SK-N-SH (cell line): ENCODE measurements at regions of chr11 and their contacts with region 1.

Region 1: DNA sequence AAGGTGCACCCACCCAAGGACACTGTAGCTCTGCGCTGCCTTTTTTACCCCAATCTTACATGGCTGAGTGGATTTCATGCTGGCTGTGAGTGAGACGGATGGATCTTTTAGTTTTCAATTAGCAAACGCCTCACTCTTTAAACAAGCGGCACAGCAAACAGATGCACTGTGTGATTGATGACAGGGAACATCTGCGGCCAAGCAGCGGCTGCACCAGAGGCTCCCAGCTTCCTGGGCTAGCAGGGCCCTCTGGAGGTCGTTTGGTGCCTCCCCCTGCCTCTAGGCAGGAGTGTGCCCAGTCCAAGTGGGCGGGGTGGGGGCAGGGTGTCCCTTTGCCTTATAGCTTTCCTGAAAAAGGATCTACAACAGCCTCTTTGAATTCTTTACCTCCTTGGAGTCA is 2.1 kb upstream of the DRD2 start:
- DNase-seq: peak; percentile 83
- H3K4me3 ChIP-seq: no peak overlapping the region
- H3K27ac ChIP-seq: no peak overlapping the region; a peak in 1 of 4 replicates
- H3K4me1 ChIP-seq: peaks cover 0 to 28% of the 10 kb centered on the region in 2 experiments; a peak in 1 of 4 replicates
- H3K27me3 ChIP-seq: peaks cover 12% of the 10 kb centered on the region; the same call in 1 of the 2 replicates
- CTCF ChIP-seq: no peak
- EP300 ChIP-seq: no peak; a peak in 1 of 4 replicates
- RAD21 ChIP-seq: peak; percentile 77

Region 2: GRCh38 chr11:113201054-113201818 is 276.1 kb before region 1 on chr11:
- CTCF ChIA-PET with region 1: no interaction called
- POLR2A ChIA-PET with region 1: no interaction called
- DNase-seq: peak; percentile 72
- H3K4me3 ChIP-seq: no peak overlapping the region
- H3K27ac ChIP-seq: peak overlapping the region in 1 of 2 experiments; percentile 93; a peak in 2 of 4 replicates
- H3K4me1 ChIP-seq: peaks cover 0 to 49% of the 10 kb centered on the region in 2 experiments; a peak in 2 of 4 replicates
- H3K27me3 ChIP-seq: no peaks in the 10 kb centered on the region
- CTCF ChIP-seq: no peak
- EP300 ChIP-seq: peak in 1 of 2 experiments; percentile 56; a peak in 1 of 4 replicates
- RAD21 ChIP-seq: no peak; the same call in 1 of the 2 replicates

Region 3: GRCh38 chr11:113332023-113332422 is 145.3 kb before region 1 on chr11:
- CTCF ChIA-PET with region 1: interaction called, 10 read pairs
- POLR2A ChIA-PET with region 1: no interaction called
- DNase-seq: no peak
- H3K4me3 ChIP-seq: no peak overlapping the region
- H3K27ac ChIP-seq: no peak overlapping the region
- H3K4me1 ChIP-seq: peaks cover 0 to 12% of the 10 kb centered on the region in 2 experiments; a peak in 2 of 4 replicates
- H3K27me3 ChIP-seq: no peaks in the 10 kb centered on the region
- CTCF ChIP-seq: no peak
- EP300 ChIP-seq: no peak
- RAD21 ChIP-seq: no peak

Region 4: GRCh38 chr11:113377681-113378412 is 99.5 kb before region 1 on chr11:
- CTCF ChIA-PET with region 1: no interaction called
- POLR2A ChIA-PET with region 1: no interaction called
- DNase-seq: peak; percentile 29
- H3K4me3 ChIP-seq: no peak overlapping the region
- H3K27ac ChIP-seq: no peak overlapping the region
- H3K4me1 ChIP-seq: peaks cover 0 to 8% of the 10 kb centered on the region in 2 experiments; a peak in 2 of 4 replicates
- H3K27me3 ChIP-seq: no peaks in the 10 kb centered on the region
- CTCF ChIP-seq: no peak
- EP300 ChIP-seq: no peak
- RAD21 ChIP-seq: no peak